ENCODE measurements at regions of chr6 and their contacts with region 1.

Region 1: DNA sequence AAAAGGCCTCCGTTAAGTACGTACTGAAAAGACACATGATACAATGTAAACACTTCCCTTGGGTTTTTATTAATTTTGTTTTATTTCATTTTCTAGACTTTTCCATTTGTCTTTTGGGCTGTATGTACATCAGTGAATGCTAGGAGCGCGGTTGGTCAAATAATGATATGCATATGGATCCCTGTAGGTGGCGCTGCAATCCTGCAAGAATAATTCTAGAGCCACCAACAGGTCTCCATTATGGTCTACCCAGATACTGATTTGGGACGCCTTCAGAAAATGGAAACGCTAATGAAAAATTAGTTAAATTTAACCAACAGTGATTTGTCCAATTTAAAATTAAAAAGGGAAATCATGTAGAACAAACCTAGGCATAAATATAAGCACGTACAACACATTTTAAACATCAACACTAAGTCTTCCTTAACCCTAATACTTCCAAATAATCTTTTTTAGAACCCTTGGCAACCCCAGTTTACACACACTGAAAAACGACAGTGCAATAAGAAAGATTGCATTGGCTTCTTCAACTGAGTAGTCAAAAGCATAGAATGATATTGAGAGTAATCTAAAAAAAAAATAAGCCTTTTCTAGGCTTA is 433.5 kb downstream of the RFPL4B start:
- DNase-seq: peak in 9 of 10 donors; percentile 26 to 90 (median 69)

Region 2: GRCh38 chr6:112667427-112667826 is 113.2 kb before region 1 on chr6:
- intact Hi-C with region 1: no loop called
- DNase-seq: no peak

Region 3: DNA sequence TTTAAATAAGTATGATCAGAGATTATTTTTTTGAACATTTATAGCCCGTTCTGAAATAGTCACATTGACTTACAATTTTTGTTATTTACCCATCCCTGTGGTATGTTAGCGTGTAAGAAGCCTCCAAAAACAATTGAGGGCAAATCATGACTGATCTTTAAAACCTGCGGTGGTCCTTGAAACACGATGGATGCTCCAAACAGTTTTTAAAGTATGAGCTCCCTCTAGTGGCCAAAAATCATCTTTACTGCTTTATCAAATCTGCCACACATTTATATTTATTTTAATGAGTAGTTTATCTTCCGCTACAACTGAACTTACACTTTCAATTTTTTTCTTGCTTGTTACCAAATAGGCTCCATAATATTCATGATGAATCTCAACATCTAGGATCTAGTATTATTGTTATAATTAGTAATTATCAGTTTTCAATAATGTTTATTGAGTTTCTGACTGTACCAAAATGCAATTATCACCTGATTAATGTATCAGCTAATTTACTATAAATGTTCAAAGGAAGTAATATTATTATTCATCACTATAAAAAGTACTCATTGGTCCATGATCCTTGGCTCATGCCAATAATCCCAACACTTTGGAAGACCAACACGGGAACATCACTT is 1128.7 kb after region 1 on chr6:
- intact Hi-C with region 1: loop called (anchors 1 kb)
- DNase-seq: no peak